ENCODE measurements at regions of chr17 and their contacts with region 1.

Region 1: GRCh38 chr17:49952209-49952911 is 16.6 kb upstream of the DLX4 start:
- DNase-seq: peak; percentile 96 to 98
- H3K4me3 ChIP-seq: no peak overlapping the region
- H3K4me3 Mint-ChIP-seq: no peak overlapping the region
- H3K27ac Mint-ChIP-seq: peak overlapping the region; percentile 7
- H3K4me1 ChIP-seq: peaks cover 7% of the 10 kb centered on the region
- H3K4me1 Mint-ChIP-seq: peaks cover 25% of the 10 kb centered on the region
- H3K27me3 ChIP-seq: no peaks in the 10 kb centered on the region
- H3K27me3 Mint-ChIP-seq: no peaks in the 10 kb centered on the region
- CTCF ChIP-seq: peak; percentile 99 to 100

Region 2: DNA sequence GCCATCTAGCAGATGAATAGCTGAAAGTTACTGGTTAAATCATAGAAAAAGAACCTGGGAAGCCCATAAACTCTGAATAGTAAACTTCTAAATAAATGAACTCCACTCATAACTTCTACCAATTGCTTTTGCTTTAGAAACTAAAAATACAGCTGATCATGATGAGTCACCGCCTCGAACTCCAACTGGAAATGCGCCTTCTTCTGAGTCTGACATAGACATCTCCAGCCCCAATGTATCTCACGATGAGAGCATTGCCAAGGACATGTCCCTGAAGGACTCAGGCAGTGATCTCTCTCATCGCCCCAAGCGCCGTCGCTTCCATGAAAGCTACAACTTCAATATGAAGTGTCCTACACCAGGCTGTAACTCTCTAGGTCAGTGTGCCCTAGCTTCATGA is 154.2 kb before region 1 on chr17:
- CTCF ChIA-PET with region 1: no interaction called
- POLR2A ChIA-PET with region 1: no interaction called
- intact Hi-C with region 1: no loop called
- DNase-seq: no peak
- H3K4me3 ChIP-seq: no peak overlapping the region
- H3K4me3 Mint-ChIP-seq: no peak overlapping the region
- H3K27ac Mint-ChIP-seq: no peak overlapping the region
- H3K4me1 ChIP-seq: no peaks in the 10 kb centered on the region
- H3K4me1 Mint-ChIP-seq: no peaks in the 10 kb centered on the region
- H3K27me3 ChIP-seq: no peaks in the 10 kb centered on the region
- H3K27me3 Mint-ChIP-seq: no peaks in the 10 kb centered on the region
- CTCF ChIP-seq: no peak

Region 3: GRCh38 chr17:49887086-49888028 is 65.0 kb before region 1 on chr17:
- CTCF ChIA-PET with region 1: interaction called, 16 read pairs
- POLR2A ChIA-PET with region 1: interaction called, 3 read pairs
- intact Hi-C with region 1: no loop called
- DNase-seq: peak; percentile 100
- H3K4me3 ChIP-seq: no peak overlapping the region
- H3K4me3 Mint-ChIP-seq: peak overlapping the region; percentile 59
- H3K27ac Mint-ChIP-seq: peak overlapping the region; percentile 96
- H3K4me1 ChIP-seq: peaks cover 88% of the 10 kb centered on the region
- H3K4me1 Mint-ChIP-seq: peaks cover 75% of the 10 kb centered on the region
- H3K27me3 ChIP-seq: no peaks in the 10 kb centered on the region
- H3K27me3 Mint-ChIP-seq: no peaks in the 10 kb centered on the region
- CTCF ChIP-seq: no peak

Region 4: GRCh38 chr17:49926886-49927285 is 25.5 kb before region 1 on chr17:
- CTCF ChIA-PET with region 1: interaction called, 12 read pairs
- POLR2A ChIA-PET with region 1: no interaction called
- intact Hi-C with region 1: no loop called
- DNase-seq: no peak
- H3K4me3 ChIP-seq: no peak overlapping the region
- H3K4me3 Mint-ChIP-seq: no peak overlapping the region
- H3K27ac Mint-ChIP-seq: no peak overlapping the region
- H3K4me1 ChIP-seq: peaks cover 24% of the 10 kb centered on the region
- H3K4me1 Mint-ChIP-seq: peaks cover 14% of the 10 kb centered on the region
- H3K27me3 ChIP-seq: no peaks in the 10 kb centered on the region
- H3K27me3 Mint-ChIP-seq: no peaks in the 10 kb centered on the region
- CTCF ChIP-seq: no peak

Region 5: GRCh38 chr17:49968380-49969133 is 16.2 kb after region 1 on chr17:
- CTCF ChIA-PET with region 1: interaction called, 12 read pairs
- POLR2A ChIA-PET with region 1: no interaction called
- intact Hi-C with region 1: loop called (anchors 1 kb)
- DNase-seq: peak; percentile 98 to 100
- H3K4me3 ChIP-seq: peak overlapping the region; percentile 44
- H3K4me3 Mint-ChIP-seq: peak overlapping the region; percentile 94
- H3K27ac Mint-ChIP-seq: peak overlapping the region; percentile 97
- H3K4me1 ChIP-seq: peaks cover 5% of the 10 kb centered on the region; the same call in 1 of the 2 replicates
- H3K4me1 Mint-ChIP-seq: peaks cover 6% of the 10 kb centered on the region
- H3K27me3 ChIP-seq: no peaks in the 10 kb centered on the region
- H3K27me3 Mint-ChIP-seq: peaks cover 3% of the 10 kb centered on the region
- CTCF ChIP-seq: peak; percentile 2 to 13

Region 6: DNA sequence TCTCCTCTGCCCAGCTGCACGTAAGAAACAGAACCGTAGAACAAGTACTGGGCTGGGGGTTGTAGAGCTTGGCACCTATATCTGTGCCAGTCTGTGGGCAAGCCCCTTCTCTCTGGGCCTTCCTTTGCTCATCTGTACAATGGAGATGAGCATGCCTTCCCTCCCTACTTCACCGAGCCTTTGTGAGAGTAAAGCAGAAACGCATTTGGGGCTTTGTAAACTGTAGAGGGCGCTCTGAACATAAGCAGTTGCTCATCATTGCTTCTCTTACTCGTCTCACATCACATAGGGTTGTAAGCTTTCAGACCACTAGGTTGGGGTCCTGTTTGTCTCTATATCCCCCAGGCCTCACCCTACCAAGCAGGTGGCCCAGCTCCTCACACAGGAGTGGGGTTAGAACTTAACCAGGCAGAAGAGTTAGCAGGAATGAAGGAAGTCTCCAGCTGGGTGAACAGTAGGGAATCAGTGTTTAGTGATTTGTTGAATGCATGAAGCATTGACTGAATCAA is 162.5 kb after region 1 on chr17:
- CTCF ChIA-PET with region 1: interaction called, 3 read pairs
- POLR2A ChIA-PET with region 1: no interaction called
- intact Hi-C with region 1: loop called (anchors 1 kb)
- DNase-seq: peak; percentile 63 to 69
- H3K4me3 ChIP-seq: no peak overlapping the region
- H3K4me3 Mint-ChIP-seq: no peak overlapping the region
- H3K27ac Mint-ChIP-seq: no peak overlapping the region
- H3K4me1 ChIP-seq: peaks cover 24% of the 10 kb centered on the region
- H3K4me1 Mint-ChIP-seq: no peaks in the 10 kb centered on the region
- H3K27me3 ChIP-seq: no peaks in the 10 kb centered on the region
- H3K27me3 Mint-ChIP-seq: no peaks in the 10 kb centered on the region
- CTCF ChIP-seq: peak; percentile 63 to 84

Region 7: GRCh38 chr17:50161023-50161910 is 208.9 kb after region 1 on chr17:
- CTCF ChIA-PET with region 1: interaction called, 8 read pairs
- POLR2A ChIA-PET with region 1: no interaction called
- intact Hi-C with region 1: loop called (anchors 1 kb)
- DNase-seq: peak; percentile 96 to 100
- H3K4me3 ChIP-seq: peak overlapping the region; percentile 48
- H3K4me3 Mint-ChIP-seq: peak overlapping the region; percentile 67
- H3K27ac Mint-ChIP-seq: peak overlapping the region; percentile 2
- H3K4me1 ChIP-seq: peaks cover 17% of the 10 kb centered on the region
- H3K4me1 Mint-ChIP-seq: peaks cover 13% of the 10 kb centered on the region
- H3K27me3 ChIP-seq: no peaks in the 10 kb centered on the region
- H3K27me3 Mint-ChIP-seq: peaks cover 9% of the 10 kb centered on the region
- CTCF ChIP-seq: peak; percentile 99 to 100